ENCODE measurements at regions of chr2 and their contacts with region 1.

Region 1: GRCh38 chr2:233251306-233252116 is at the start of gene ATG16L1:
- DNase-seq: peak; percentile 97
- ATAC-seq: peak; percentile 99 to 100
- total RNA-seq, gene ATG16L1: 15.8 to 17.8 TPM

Region 2: GRCh38 chr2:233098615-233099014 is 152.9 kb before region 1 on chr2:
- intact Hi-C with region 1: loop called in 1 of 2 experiments (anchors 1 kb)
- DNase-seq: peak; percentile 35
- ATAC-seq: peak in 1 of 2 donors; percentile 26

Measured in left cardiac atrium (tissue), 4 donors.